GM23248 (cell line): ENCODE measurements at regions of chr1 and their contacts with region 1.

Region 1: GRCh38 chr1:161098210-161099068 is at the start of gene KLHDC9:
- DNase-seq: peak; percentile 79
- H3K4me3 ChIP-seq: peak within 1 kb of the TSS; percentile 80
- H3K27ac ChIP-seq: no peak within 1 kb of the TSS
- H3K4me1 ChIP-seq: peaks cover 18% of the 10 kb centered on the region
- H3K27me3 ChIP-seq: no peaks in the 10 kb centered on the region
- total RNA-seq, gene KLHDC9: 3.7 and 5.6 TPM in 2 replicates

Region 2: GRCh38 chr1:160997323-160998038 is 101.0 kb before region 1 on chr1:
- in situ Hi-C with region 1: loop called (anchors 10 kb)
- DNase-seq: peak; percentile 72
- H3K4me3 ChIP-seq: no peak overlapping the region
- H3K27ac ChIP-seq: no peak overlapping the region
- H3K4me1 ChIP-seq: peaks cover 15% of the 10 kb centered on the region
- H3K27me3 ChIP-seq: no peaks in the 10 kb centered on the region

Region 3: DNA sequence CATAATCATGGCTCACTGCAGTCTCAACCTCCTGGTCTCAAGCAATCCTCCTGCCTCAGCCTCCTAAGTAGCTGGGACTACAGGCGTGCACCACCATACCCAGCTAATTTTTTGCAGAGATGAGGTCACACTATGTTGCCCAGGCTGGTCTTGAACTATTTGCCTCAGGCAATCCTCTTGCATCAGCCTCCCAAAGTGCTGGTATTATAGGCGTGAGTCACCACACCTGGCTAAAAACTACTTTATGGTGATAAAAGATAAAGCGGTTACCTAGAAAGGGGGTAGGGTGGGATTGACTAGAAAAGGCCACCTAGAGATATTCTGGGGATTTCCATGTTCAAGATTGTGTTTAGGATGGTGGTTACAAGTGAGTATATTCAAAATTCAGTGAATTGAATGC is 64.7 kb before region 1 on chr1:
- in situ Hi-C with region 1: no loop called
- DNase-seq: peak; percentile 16
- H3K4me3 ChIP-seq: no peak overlapping the region
- H3K27ac ChIP-seq: no peak overlapping the region
- H3K4me1 ChIP-seq: 0 out of 2 replicates have a peak, but pooled peaks cover 4% of the 10 kb centered on the region
- H3K27me3 ChIP-seq: no peaks in the 10 kb centered on the region

Region 4: GRCh38 chr1:161045750-161046571 is 52.5 kb before region 1 on chr1 and contains the start of gene USF1:
- in situ Hi-C with region 1: loop called (anchors 5 kb)
- DNase-seq: peak; percentile 98
- H3K4me3 ChIP-seq: peak within 1 kb of the TSS; percentile 91
- H3K27ac ChIP-seq: peak within 1 kb of the TSS; percentile 93
- H3K4me1 ChIP-seq: peaks cover 12% of the 10 kb centered on the region
- H3K27me3 ChIP-seq: no peaks in the 10 kb centered on the region
- total RNA-seq, gene USF1: 53.2 and 68.4 TPM in 2 replicates